ENCODE measurements at regions of chr1 and their contacts with region 1.

Region 1: DNA sequence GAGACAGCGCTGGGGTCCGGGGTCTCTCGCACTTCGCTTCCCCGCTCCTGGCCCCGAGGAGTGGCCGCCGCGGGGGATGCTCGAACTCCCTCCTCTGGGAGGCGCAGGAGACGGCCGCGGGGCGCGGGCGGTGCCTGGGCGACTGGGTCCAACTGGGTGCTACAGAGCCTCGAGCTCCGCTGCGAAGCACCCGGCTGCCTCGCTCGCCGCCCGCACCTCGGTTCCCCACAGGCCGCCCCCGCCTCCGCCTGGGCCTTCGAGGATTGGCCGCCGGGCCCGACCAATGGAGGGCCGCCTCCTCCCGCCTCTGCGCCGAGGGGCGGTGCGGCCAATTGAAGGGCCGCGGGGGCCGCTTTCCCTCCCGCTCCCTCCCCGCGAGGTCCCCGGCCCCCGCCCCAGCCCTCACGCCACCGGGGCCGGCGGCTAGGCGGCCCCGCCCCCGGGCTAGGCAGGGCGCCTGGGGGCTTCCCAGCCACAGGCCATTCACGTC is at the start of gene CNN3:
- DNase-seq: peak; percentile 61 to 96
- H3K4me3 ChIP-seq: peak within 1 kb of the TSS; percentile 91 to 98
- H3K27ac ChIP-seq: peak within 1 kb of the TSS; percentile 99 to 100
- H3K4me1 ChIP-seq: peaks cover 9 to 40% of the 10 kb centered on the region in 2 donors
- H3K27me3 ChIP-seq: no peaks in the 10 kb centered on the region
- CTCF ChIP-seq: no peak
- total RNA-seq, gene CNN3: 362 TPM

Region 2: DNA sequence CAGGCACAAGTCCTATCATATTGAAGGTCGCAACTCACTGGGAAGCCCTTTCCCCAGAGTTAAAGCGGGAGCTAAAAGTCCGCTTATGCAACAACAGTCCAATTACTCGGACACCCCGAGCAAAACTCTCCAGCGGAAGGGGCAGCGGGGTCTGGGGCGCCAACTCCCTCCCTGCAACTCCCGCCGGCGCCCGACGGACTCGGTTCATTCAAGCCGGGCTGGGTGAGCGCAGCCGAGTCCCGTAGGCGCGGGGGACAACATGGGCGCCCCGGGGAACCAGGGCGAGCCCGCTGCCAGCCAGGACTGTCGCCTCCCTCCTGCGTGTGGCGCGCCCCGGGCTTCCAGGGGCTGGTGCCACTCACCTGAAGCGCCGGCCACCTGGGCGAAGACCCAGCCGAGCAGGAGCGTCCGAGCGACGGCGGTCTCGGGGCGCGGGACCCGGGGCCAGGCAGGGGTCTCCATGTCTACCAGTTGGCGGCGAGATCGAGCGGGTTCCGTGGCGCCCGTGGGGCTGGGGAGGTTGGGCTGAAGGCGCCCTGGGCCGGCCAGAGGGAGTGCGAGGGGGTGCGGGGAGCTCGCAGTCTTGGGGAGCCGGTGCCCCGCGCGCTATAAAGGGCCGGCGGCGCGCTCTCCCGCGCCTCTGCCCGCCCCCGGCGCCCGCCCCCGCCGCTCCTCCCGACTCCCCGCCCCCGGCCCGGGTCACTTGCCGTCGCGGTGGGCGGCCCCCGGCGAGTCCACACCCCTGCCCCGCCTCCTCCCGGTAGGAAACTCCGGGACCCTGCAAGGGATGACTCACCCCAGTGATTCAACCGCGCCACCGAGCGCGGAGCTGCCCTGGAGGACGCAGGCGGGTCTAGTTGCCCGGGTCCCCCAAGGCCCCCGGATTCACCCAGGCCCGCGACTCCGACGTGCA is 385.5 kb before region 1 on chr1 and contains the start of gene F3:
- intact Hi-C with region 1: loop called (anchors 2 kb)
- DNase-seq: peak; percentile 68 to 95
- H3K4me3 ChIP-seq: peak within 1 kb of the TSS; percentile 73 to 100
- H3K27ac ChIP-seq: peak within 1 kb of the TSS; percentile 88 to 97
- H3K4me1 ChIP-seq: peaks cover 8 to 21% of the 10 kb centered on the region in 2 donors
- H3K27me3 ChIP-seq: no peaks in the 10 kb centered on the region
- CTCF ChIP-seq: peak in 1 of 3 experiments; percentile 17
- total RNA-seq, gene F3: 32.5 TPM

Region 3: DNA sequence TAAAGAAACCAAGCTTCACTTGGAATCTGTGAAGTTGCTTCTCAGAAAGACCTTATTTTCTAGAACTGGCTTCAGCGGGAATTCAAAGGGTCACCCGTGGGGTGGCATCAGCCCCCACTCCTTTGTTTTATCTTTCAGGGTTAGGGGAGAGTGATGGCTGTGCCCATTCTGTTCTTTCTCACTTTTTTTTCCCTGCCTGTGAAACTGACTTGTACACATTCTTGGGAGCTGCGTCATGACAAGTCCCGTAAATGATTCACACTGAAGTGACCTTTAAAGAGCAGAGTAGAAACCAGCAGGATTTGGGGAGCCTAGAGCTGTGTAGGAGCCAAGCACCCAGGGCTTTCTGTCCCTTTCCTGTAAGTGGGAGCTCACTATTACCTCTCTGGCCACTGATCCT is 63.0 kb before region 1 on chr1:
- intact Hi-C with region 1: loop called (anchors 1 kb)
- DNase-seq: peak; percentile 21 to 89
- H3K4me3 ChIP-seq: peak overlapping the region in 1 of 2 donors; percentile 22
- H3K27ac ChIP-seq: peak overlapping the region; percentile 94
- H3K4me1 ChIP-seq: peaks cover 14 to 57% of the 10 kb centered on the region in 2 donors
- H3K27me3 ChIP-seq: no peaks in the 10 kb centered on the region
- CTCF ChIP-seq: no peak

Region 4: DNA sequence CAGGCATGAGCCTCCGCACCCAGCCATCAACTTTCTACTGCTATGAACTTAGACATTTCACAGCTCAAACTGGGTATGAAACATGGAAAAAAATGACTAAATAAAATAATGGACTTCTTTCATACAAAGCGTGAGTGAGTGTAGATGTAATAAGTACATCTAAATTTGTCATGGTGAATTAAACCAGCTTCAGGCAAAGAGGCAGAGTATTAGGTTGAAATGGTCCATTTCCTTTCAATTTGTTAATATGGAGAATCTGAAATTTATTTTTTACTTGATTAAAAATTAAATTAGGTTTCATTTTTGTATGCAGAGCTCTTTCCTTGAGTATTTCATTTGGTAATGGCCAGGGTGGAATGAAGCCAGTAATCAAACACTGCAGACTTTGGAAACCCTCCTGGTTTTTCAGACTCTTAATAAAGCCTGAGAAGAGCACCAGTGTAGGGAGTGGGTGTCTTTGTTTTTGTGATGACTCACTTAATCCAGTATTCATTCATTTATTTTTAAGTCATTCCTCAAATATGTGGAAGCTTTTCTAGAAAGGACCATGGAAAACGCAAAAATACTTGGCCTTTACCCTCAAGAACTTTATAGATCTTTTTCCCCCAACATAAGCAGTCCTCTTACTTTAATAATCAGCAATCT is 96.6 kb after region 1 on chr1:
- intact Hi-C with region 1: loop called (anchors 1 kb)
- DNase-seq: no peak
- H3K4me3 ChIP-seq: peak overlapping the region in 1 of 2 donors; percentile 17
- H3K27ac ChIP-seq: peak overlapping the region; percentile 78 to 85
- H3K4me1 ChIP-seq: peaks cover 3 to 27% of the 10 kb centered on the region in 2 donors
- H3K27me3 ChIP-seq: no peaks in the 10 kb centered on the region
- CTCF ChIP-seq: no peak

Region 5: DNA sequence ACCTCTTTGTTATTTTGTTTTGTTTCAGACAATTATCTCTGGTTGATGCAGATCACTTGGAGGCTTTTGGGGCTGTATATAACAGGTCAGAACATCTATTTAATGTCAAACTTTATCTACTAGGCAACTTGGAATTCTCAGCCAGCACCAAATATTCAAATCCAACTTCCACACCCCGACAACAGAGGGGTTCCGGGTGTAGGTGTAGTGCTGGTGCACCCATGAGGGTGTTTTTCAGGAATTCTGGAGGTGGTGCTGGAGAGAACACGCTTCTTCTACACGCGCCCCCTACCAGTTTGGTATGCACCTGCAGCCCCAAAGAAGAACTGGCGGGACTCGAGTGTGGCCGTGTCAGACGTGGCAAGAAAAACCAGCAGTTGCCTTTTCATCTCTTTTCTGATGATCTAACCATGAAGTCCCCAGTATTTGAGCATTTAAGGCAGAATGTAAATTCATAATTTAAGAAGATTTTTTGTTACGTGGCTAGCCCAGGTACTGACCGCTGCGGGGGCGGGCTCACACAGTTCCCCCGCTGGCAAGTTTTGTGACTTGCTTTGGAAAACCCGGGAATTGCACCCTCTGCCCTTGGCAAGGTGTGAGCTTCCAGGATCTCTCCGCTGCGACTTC is 189.7 kb after region 1 on chr1:
- intact Hi-C with region 1: loop called (anchors 5 kb)
- DNase-seq: peak in 1 of 2 donors; percentile 79
- H3K4me3 ChIP-seq: peak overlapping the region; percentile 85 to 88
- H3K27ac ChIP-seq: peak overlapping the region; percentile 77 to 85
- H3K4me1 ChIP-seq: peaks cover 0 to 4% of the 10 kb centered on the region in 2 donors
- H3K27me3 ChIP-seq: no peaks in the 10 kb centered on the region
- CTCF ChIP-seq: peak; percentile 60 to 71 (median 61)

Region 6: GRCh38 chr1:96080925-96081324 is 1154.0 kb after region 1 on chr1:
- intact Hi-C with region 1: no loop called
- DNase-seq: no peak
- H3K4me3 ChIP-seq: no peak overlapping the region
- H3K27ac ChIP-seq: no peak overlapping the region
- H3K4me1 ChIP-seq: no peaks in the 10 kb centered on the region
- H3K27me3 ChIP-seq: no peaks in the 10 kb centered on the region
- CTCF ChIP-seq: no peak